K562 (cell line): ENCODE measurements at regions of chr11 and their contacts with region 1.

Region 1: GRCh38 chr11:20459865-20460264 is 72.3 kb downstream of the PRMT3 start:
- DNase-seq: peak in 1 of 4 experiments; percentile 35
- ATAC-seq: peak; percentile 32
- H3K4me3 ChIP-seq: no peak overlapping the region
- H3K27ac ChIP-seq: peak overlapping the region; percentile 77
- H3K4me1 ChIP-seq: peaks cover 17 to 56% of the 10 kb centered on the region in 2 experiments
- H3K27me3 ChIP-seq: no peaks in the 10 kb centered on the region
- CTCF ChIP-seq: no peak
- EP300 ChIP-seq: 0 out of 2 replicates have a peak, but pooled peaks have one; percentile 21
- POLR2A ChIP-seq: no peak
- RAD21 ChIP-seq: no peak

Region 2: GRCh38 chr11:20474176-20474881 is 14.5 kb after region 1 on chr11:
- CTCF ChIA-PET with region 1: no interaction called
- POLR2A ChIA-PET with region 1: interaction called, 12 read pairs
- in situ Hi-C with region 1: no loop called
- intact Hi-C with region 1: no loop called
- DNase-seq: peak in 1 of 4 experiments; percentile 37
- ATAC-seq: peak; percentile 67
- H3K4me3 ChIP-seq: no peak overlapping the region
- H3K27ac ChIP-seq: peak overlapping the region; percentile 44
- H3K4me1 ChIP-seq: peaks cover 20 to 41% of the 10 kb centered on the region in 2 experiments
- H3K27me3 ChIP-seq: no peaks in the 10 kb centered on the region
- CTCF ChIP-seq: no peak
- EP300 ChIP-seq: no peak
- POLR2A ChIP-seq: no peak
- RAD21 ChIP-seq: no peak

Region 3: DNA sequence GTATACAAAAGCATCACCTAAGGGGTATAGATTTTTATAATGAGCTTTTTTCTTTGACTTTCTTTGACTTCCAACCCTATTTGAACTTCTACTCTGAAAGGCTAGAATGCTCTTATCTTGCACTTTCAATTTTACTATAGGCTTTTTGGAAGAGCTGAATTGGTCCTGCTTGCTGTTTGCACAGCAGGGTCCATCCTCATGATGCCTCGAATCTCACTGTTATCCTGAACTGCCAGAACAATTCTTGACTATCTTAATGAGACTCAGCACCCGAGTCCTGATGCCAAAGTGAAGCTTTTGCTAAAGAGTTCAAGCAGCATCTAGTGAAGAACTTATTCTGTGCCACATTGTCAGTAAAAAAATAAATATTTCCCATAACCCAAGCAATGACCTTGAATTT is 1244.7 kb after region 1 on chr11:
- CTCF ChIA-PET with region 1: no interaction called
- POLR2A ChIA-PET with region 1: no interaction called
- in situ Hi-C with region 1: no loop called
- intact Hi-C with region 1: no loop called
- DNase-seq: no peak
- ATAC-seq: no peak
- H3K4me3 ChIP-seq: no peak overlapping the region
- H3K27ac ChIP-seq: no peak overlapping the region
- H3K4me1 ChIP-seq: no peaks in the 10 kb centered on the region
- H3K27me3 ChIP-seq: no peaks in the 10 kb centered on the region
- CTCF ChIP-seq: no peak
- EP300 ChIP-seq: no peak
- POLR2A ChIP-seq: no peak
- RAD21 ChIP-seq: no peak